Right ventricle myocardium inferior (tissue), 1 donor: ENCODE measurements at regions of chr3 and their contacts with region 1.

Region 1: GRCh38 chr3:38004415-38005076 is 14.0 kb downstream of the VILL start:
- DNase-seq: peak; percentile 84
- ATAC-seq: peak; percentile 73

Region 2: GRCh38 chr3:37855363-37855970 is 149.1 kb before region 1 on chr3:
- intact Hi-C with region 1: loop called (anchors 1 kb)
- DNase-seq: peak; percentile 94
- ATAC-seq: peak; percentile 54

Region 3: GRCh38 chr3:37974121-37975083 is 30.1 kb before region 1 on chr3:
- intact Hi-C with region 1: loop called (anchors 2 kb)
- DNase-seq: peak; percentile 81
- ATAC-seq: peak; percentile 64

Region 4: DNA sequence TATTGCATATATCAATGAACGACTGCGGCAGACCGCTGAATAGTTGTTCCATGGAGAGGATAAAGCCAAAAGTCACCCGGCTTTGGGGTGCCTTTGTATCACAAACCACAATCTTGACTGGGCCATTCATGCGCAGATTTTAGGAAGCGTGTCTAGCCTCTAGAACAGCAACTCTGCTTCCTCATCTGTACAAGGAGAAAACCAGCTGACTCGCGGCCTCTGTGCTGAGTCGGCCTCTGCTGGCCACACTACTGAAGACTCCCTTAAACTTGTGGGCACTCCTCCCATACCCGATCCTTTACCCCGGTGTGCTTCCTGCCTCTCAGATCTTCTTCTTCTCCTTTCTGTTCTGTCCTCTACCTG is 35.3 kb after region 1 on chr3:
- intact Hi-C with region 1: loop called (anchors 2 kb)
- DNase-seq: peak; percentile 84
- ATAC-seq: peak; percentile 90

Region 5: DNA sequence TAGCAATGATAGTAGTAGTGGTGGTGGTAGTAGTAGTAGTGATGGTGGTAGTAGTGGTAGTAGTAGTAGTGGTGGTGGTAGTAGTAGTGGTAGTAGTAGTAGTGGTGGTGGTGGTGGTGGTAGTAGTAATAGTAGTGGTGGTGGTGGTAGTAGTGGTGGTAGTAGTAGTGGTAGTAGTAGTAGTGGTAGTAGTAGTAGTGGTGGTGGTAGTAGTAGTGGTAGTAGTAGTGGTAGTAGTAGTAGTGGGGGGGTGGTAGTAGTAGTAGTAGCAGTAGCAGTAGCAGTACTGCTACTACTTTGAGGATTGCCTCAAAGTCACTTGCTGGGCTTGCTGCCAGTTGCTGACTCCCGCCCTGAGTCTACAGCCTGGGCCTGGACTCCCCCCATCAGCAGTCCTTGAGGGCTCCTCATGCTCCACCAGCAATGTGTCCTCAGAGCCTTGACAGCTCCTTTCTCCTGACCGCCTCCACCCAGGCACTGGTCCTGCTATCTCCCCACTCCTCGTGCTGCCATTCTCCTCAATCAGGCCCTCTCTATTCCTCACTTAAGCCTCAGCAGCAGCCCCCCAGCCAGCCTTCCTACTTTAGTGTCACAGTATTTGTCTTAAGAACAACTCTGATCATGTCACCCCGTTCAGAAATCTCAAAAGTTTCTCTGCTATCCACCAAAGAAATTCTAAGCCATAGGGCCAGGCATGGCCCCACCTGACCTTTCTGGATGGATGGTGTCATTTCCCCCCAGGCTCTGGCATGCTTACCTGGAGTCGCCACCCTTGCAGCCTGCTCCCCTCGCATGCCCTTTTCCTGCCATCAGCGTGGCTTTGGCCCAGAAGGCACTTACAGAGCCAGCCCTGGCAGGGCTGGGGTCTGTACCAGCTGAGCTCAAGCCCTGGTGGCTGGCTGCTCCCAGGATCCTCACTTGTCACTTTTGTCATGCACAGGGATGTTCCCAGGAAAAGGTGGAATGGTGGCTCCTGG is 80.1 kb after region 1 on chr3:
- intact Hi-C with region 1: no loop called
- DNase-seq: no peak
- ATAC-seq: peak; percentile 63

Region 6: DNA sequence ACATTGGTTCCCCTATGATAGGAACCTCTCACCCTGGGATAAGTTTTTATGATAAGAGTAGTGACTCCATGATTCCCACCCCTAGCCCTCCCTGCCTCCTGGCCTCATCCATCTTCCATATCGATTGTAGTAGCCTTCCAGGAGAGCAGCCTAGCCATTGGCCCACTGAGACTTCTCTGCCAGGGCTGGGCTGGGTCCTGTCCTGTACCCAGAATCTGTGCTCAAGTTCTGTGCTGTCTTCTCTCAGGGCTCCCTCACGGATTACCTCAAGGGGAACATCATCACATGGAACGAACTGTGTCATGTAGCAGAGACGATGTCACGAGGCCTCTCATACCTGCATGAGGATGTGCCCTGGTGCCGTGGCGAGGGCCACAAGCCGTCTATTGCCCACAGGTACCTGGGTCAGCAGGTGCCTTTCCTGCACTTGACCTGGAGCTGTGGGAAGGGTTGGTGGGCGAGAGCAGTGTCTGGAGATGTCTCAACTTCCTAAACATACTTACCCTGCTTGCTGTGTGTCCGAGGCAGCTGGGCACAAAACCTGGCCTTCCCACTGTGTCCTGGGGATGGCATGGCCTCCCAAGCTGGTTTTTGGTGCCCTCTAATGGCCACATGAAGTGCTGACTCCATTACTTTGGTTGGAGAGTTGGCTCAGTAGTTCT is 475.0 kb after region 1 on chr3:
- intact Hi-C with region 1: loop called (anchors 10 kb)
- DNase-seq: peak; percentile 76
- ATAC-seq: peak; percentile 78